Caco-2 (cell line): ENCODE measurements at regions of chr22 and their contacts with region 1.

Region 1: GRCh38 chr22:41848468-41848867 is 15.6 kb downstream of the SREBF2 start:
- DNase-seq: peak; percentile 53 to 70
- H3K4me3 ChIP-seq: no peak overlapping the region
- H3K4me3 Mint-ChIP-seq: no peak overlapping the region
- H3K27ac Mint-ChIP-seq: no peak overlapping the region
- H3K4me1 ChIP-seq: peaks cover 52% of the 10 kb centered on the region
- H3K4me1 Mint-ChIP-seq: peaks cover 39% of the 10 kb centered on the region
- H3K27me3 ChIP-seq: no peaks in the 10 kb centered on the region
- H3K27me3 Mint-ChIP-seq: no peaks in the 10 kb centered on the region
- CTCF ChIP-seq: no peak

Region 2: GRCh38 chr22:40694411-40694810 is 1154.1 kb before region 1 on chr22:
- CTCF ChIA-PET with region 1: no interaction called
- POLR2A ChIA-PET with region 1: no interaction called
- intact Hi-C with region 1: no loop called
- DNase-seq: no peak
- H3K4me3 ChIP-seq: no peak overlapping the region
- H3K4me3 Mint-ChIP-seq: no peak overlapping the region
- H3K27ac Mint-ChIP-seq: no peak overlapping the region
- H3K4me1 ChIP-seq: no peaks in the 10 kb centered on the region
- H3K4me1 Mint-ChIP-seq: no peaks in the 10 kb centered on the region
- H3K27me3 ChIP-seq: no peaks in the 10 kb centered on the region
- H3K27me3 Mint-ChIP-seq: no peaks in the 10 kb centered on the region
- CTCF ChIP-seq: no peak

Region 3: GRCh38 chr22:41832553-41833368 is 15.7 kb before region 1 on chr22 and contains the start of gene SREBF2:
- CTCF ChIA-PET with region 1: interaction called, 6 read pairs
- POLR2A ChIA-PET with region 1: interaction called, 18 read pairs
- intact Hi-C with region 1: loop called (anchors 1 kb)
- DNase-seq: peak; percentile 99 to 100
- H3K4me3 ChIP-seq: peak within 1 kb of the TSS; percentile 94
- H3K4me3 Mint-ChIP-seq: peak within 1 kb of the TSS; percentile 98
- H3K27ac Mint-ChIP-seq: peak within 1 kb of the TSS; percentile 95
- H3K4me1 ChIP-seq: peaks cover 11% of the 10 kb centered on the region
- H3K4me1 Mint-ChIP-seq: peaks cover 14% of the 10 kb centered on the region
- H3K27me3 ChIP-seq: no peaks in the 10 kb centered on the region
- H3K27me3 Mint-ChIP-seq: no peaks in the 10 kb centered on the region
- CTCF ChIP-seq: no peak
- total RNA-seq, gene SREBF2: 134 and 150 TPM in 2 replicates

Region 4: DNA sequence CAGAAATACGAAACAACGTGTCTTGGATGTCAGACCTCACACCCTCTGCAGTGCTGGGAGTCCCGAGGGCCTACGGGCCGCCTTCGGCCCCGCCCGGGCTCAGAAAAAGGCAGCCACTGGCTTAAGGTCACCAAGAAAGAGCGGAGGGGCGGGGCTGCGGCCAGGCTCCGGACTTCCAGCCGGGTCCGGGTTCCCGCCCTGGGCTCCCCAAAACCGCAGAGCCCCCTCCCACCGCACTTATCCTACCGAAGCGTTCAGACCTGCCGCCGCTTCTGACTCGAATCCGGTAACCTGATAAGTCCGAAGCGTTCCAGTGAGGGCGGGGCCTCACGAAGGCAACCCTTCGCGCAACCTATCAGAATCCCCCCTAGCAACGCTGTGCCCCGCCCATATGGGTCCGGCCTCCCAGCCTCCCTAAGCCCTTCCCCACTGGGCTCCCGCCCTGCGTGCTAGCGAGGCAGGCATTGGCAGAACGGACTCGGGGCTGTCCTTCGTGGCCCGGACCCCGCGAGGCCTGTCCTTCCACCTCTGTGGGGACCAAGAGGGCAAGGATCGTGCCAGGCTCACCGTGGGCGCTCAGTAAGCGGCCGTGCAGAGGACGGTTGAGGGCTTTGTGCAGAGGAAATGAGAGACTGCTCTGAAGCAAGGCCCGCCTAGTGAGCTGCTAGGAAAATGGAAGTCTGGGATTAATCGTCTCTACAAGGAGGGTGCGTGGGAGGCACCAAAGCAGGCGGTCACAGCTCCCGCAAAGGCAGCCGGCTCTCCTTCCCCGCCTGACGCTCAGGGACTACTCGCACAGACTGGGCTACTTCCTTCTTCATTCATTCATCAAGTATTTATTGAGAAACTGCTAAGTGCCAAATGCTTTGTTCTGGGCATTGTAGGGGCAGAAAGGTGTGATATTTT is 222.3 kb after region 1 on chr22 and contains the start of gene NAGA:
- CTCF ChIA-PET with region 1: no interaction called
- POLR2A ChIA-PET with region 1: no interaction called
- intact Hi-C with region 1: loop called (anchors 5 kb)
- DNase-seq: peak; percentile 94 to 96
- H3K4me3 ChIP-seq: peak within 1 kb of the TSS; percentile 70
- H3K4me3 Mint-ChIP-seq: peak within 1 kb of the TSS; percentile 92
- H3K27ac Mint-ChIP-seq: peak within 1 kb of the TSS; percentile 89
- H3K4me1 ChIP-seq: peaks cover 26% of the 10 kb centered on the region
- H3K4me1 Mint-ChIP-seq: peaks cover 5% of the 10 kb centered on the region
- H3K27me3 ChIP-seq: no peaks in the 10 kb centered on the region
- H3K27me3 Mint-ChIP-seq: no peaks in the 10 kb centered on the region
- CTCF ChIP-seq: no peak
- total RNA-seq, gene NAGA: 27.8 and 28.3 TPM in 2 replicates